Activated T-helper 2 cell treated with anti-CD3 and anti-CD28 coated beads, Interferon-gamma antibody, Interleukin-2, Interleukin-4, amounts not matched to agents 10 μg/mL and 5 μg/mL and 100 μg/mL, durations not matched to agents 14 hours and 24 hours and 36 hours (primary cell): ENCODE measurements at regions of chr7 and their contacts with region 1.

Region 1: DNA sequence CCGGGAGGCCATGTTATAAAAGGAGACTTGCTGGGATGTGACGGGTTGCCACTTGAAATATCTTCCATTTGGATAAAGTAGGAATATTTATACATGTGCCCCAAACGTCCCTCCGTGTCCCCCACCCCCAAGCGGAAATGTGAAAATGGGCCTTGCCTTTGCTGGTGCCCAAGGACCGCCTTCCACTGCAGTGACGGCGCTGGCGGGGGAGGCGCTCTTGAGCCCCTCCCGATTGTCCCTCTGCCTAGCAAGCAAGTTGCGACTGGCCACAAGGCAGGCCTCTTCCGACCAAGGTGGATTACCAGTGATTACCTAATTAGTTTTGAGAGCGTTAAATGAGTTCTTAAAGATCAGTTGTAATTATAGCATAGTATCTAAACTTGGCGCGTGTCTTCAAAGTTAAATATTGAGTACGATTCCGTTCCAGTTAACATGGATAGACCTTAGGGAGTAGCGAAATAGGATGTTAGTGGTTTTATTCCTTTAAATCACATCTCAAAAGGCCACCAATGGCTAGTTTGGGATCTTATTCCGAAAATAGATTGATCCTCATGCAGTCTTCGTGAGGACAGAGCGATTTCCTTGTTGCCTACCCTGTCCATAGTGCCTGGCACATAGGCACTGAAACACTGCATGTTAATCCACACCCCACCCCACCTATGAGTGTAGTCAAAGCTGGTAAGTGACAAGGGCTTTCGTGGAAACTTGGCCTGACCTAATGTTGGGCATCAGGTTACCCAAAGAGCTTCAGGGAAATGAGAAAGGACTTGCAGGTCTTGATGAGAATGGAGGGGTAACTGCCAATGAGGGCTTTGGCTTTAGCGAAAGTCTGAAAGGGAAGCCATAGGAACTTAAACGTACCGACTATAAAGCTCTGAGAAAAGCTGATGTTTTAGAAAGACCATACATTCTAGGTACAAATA is 1.1 kb downstream of the PPIA start:
- DNase-seq: peak; percentile 80
- H3K4me3 Mint-ChIP-seq: peak overlapping the region; percentile 98
- H3K27ac Mint-ChIP-seq: peak overlapping the region; percentile 95
- H3K4me1 Mint-ChIP-seq: peaks cover 28% of the 10 kb centered on the region
- H3K27me3 Mint-ChIP-seq: no peaks in the 10 kb centered on the region

Region 2: DNA sequence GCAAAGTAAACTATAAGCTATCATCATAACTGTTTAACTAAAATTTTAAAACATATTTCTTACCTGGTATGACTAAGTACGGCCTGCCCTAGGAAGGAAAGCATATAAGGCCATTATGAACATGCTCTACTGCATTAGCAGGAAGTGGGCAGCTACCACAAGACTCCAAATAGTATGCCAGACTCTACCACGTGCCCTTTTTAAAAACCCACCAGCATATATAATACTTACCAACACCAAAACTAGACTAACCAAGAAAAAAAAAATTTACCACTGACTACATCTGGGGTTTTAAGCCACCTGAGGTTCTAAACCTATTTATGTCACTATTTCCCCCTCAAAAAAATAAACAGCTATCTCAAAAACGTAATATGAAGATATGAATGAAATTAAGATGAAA is 337.3 kb before region 1 on chr7:
- intact Hi-C with region 1: loop called (anchors 2 kb)
- DNase-seq: peak; percentile 52
- H3K4me3 Mint-ChIP-seq: peak overlapping the region; percentile 33
- H3K27ac Mint-ChIP-seq: peak overlapping the region; percentile 79
- H3K4me1 Mint-ChIP-seq: peaks cover 57% of the 10 kb centered on the region
- H3K27me3 Mint-ChIP-seq: no peaks in the 10 kb centered on the region

Region 3: DNA sequence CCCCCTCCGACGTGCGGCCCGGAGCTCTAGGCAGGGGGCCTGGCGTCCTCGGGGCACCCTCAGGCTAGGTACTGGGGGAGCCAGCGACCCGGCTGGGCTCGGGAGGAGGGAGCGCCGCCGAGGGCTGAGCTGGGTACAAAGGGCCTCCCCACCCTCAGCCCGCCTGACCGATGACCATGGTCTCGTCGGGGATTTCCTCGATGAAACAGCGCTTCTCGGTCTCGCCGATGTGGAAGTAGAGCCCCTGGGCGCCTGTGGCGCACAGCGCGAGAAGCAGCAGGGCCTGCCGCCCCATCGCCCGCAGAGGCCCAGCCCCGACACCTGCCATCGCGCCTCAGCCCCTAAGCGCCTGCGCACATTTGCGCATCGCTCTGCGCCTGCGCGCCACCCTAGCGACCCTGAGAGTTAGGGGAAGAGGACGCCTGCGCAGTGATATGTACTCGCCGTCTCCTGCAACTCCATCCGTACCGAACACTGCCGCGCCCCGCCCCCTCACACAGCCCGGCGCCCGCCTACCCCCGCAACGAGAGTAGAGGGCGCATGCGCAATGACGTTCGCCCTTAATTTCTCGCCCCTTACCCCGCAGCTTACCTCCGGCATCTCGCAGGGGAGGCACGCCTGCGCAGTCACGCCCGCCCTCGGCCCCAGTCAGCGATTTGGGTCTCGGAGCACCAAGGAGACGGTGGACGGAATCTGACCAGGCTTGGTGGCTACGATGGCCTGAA is 215.5 kb before region 1 on chr7 and contains the start of gene TMED4:
- intact Hi-C with region 1: loop called (anchors 1 kb)
- DNase-seq: peak; percentile 100
- H3K4me3 Mint-ChIP-seq: peak within 1 kb of the TSS; percentile 88
- H3K27ac Mint-ChIP-seq: peak within 1 kb of the TSS; percentile 93
- H3K4me1 Mint-ChIP-seq: peaks cover 23% of the 10 kb centered on the region
- H3K27me3 Mint-ChIP-seq: peaks cover 2% of the 10 kb centered on the region
- total RNA-seq, gene TMED4: 70.3 and 75.1 TPM in 2 replicates

Region 4: GRCh38 chr7:44712012-44712411 is 85.6 kb before region 1 on chr7:
- intact Hi-C with region 1: no loop called
- DNase-seq: no peak
- H3K4me3 Mint-ChIP-seq: no peak overlapping the region
- H3K27ac Mint-ChIP-seq: no peak overlapping the region
- H3K4me1 Mint-ChIP-seq: peaks cover 2% of the 10 kb centered on the region
- H3K27me3 Mint-ChIP-seq: no peaks in the 10 kb centered on the region

Region 5: GRCh38 chr7:44735403-44736165 is 62.0 kb before region 1 on chr7:
- intact Hi-C with region 1: loop called (anchors 2 kb)
- DNase-seq: no peak
- H3K4me3 Mint-ChIP-seq: no peak overlapping the region
- H3K27ac Mint-ChIP-seq: peak overlapping the region; percentile 89
- H3K4me1 Mint-ChIP-seq: peaks cover 11% of the 10 kb centered on the region
- H3K27me3 Mint-ChIP-seq: no peaks in the 10 kb centered on the region

Region 6: DNA sequence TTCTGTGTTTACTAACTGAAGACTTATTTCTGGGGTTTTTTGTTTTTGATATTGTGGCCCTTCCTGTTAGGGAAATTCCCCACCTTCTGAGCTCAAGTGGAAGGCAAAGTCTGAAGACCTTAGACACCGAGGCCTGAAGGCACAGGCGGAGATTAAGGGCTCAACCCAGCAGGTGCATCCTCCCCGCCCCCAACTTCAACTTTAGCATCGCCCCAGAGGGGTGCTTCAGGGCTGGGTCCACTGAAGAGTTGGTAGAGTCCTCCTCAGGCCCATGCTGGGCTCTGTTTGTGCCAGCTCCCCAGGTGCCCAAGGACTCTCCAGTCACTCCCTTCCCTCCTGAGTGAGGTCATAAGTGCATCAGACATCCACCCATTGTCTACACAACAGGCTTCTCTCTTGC is 10.5 kb before region 1 on chr7:
- intact Hi-C with region 1: no loop called
- DNase-seq: no peak
- H3K4me3 Mint-ChIP-seq: no peak overlapping the region
- H3K27ac Mint-ChIP-seq: no peak overlapping the region
- H3K4me1 Mint-ChIP-seq: no peaks in the 10 kb centered on the region
- H3K27me3 Mint-ChIP-seq: no peaks in the 10 kb centered on the region

Region 7: GRCh38 chr7:44885394-44886317 is 88.1 kb after region 1 on chr7 and contains the start of gene PURB:
- intact Hi-C with region 1: loop called (anchors 1 kb)
- DNase-seq: peak; percentile 97
- H3K4me3 Mint-ChIP-seq: peak within 1 kb of the TSS; percentile 97
- H3K27ac Mint-ChIP-seq: peak within 1 kb of the TSS; percentile 99
- H3K4me1 Mint-ChIP-seq: peaks cover 35% of the 10 kb centered on the region
- H3K27me3 Mint-ChIP-seq: no peaks in the 10 kb centered on the region
- total RNA-seq, gene PURB: 32.9 and 33.9 TPM in 2 replicates

Region 8: DNA sequence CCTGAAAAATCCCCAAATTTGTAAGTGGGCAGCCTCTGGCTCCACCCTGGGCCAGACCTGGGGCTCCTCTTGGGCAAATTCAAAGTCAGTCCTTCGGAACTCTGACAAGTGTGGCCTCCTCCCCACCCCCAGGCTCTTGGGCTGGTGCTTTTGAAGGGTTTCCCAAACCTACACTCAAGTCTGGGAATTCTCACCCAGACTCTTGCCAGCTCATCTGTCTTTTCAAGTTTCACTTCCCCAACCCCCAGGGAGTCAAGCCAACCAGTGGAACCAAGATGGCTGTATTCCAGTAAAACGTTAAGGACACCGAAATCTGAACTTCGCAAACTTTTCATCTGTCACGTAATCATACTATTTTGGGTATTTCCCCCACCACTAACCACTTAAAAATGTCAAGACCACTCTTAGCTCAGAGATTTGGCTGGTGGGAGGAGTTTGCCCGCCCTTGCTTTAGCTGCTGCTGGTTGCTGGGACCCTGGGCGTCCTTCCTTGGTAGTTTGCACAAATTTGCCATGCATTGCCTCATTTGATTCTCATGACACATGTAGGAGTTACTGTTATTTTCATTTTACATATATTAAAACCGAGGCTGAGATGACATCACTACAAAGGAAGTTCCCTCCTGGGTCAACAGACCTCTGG is 182.9 kb after region 1 on chr7:
- intact Hi-C with region 1: loop called (anchors 2 kb)
- DNase-seq: peak; percentile 56
- H3K4me3 Mint-ChIP-seq: peak overlapping the region; percentile 97
- H3K27ac Mint-ChIP-seq: peak overlapping the region; percentile 98
- H3K4me1 Mint-ChIP-seq: peaks cover 63% of the 10 kb centered on the region
- H3K27me3 Mint-ChIP-seq: no peaks in the 10 kb centered on the region